ENCODE measurements at regions of chr6 and their contacts with region 1.

Region 1: GRCh38 chr6:12605888-12606345 is 110.7 kb upstream of the PHACTR1 start:
- DNase-seq: no peak
- ATAC-seq: peak in 1 of 2 donors; percentile 76
- H3K4me3 ChIP-seq: no peak overlapping the region
- H3K27ac ChIP-seq: no peak overlapping the region
- H3K4me1 ChIP-seq: peaks cover 3% of the 10 kb centered on the region
- H3K27me3 ChIP-seq: no peaks in the 10 kb centered on the region

Region 2: DNA sequence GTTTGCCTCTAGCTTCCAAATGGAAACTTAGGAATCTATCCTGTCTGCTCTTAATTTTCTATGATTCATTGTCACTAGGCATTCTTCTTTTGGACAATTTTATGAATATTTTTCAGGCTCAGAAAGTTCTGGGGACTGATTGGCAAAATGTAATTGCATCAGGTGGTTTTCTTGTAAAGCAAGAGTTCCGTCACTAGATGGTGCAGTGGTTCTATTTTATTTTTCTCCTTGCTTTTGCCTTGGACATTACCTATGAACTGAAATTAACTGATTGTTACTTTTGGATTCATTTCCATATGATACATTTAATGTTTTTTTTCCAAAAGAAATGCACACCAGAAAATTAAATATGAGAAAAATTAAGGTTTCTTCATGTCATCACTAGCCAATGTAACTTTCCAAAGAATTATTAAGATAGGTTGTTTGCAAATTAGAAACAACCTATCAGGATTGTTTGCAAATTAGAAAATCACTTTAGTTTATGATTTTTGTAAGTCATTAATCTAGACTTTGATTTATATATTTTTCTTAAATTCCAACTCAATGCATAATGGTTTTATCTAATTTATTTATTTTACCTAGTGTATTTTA is 1020.4 kb before region 1 on chr6:
- intact Hi-C with region 1: loop called in 3 of 4 experiments (anchors 5 to 10 kb)
- DNase-seq: no peak
- ATAC-seq: no peak
- H3K4me3 ChIP-seq: no peak overlapping the region
- H3K27ac ChIP-seq: no peak overlapping the region
- H3K4me1 ChIP-seq: no peaks in the 10 kb centered on the region
- H3K27me3 ChIP-seq: no peaks in the 10 kb centered on the region

Region 3: GRCh38 chr6:11653028-11653583 is 952.8 kb before region 1 on chr6:
- intact Hi-C with region 1: loop called in 2 of 4 experiments (anchors 5 to 10 kb)
- DNase-seq: peak in 1 of 3 donors; percentile 28
- ATAC-seq: peak in 1 of 2 donors; percentile 54
- H3K4me3 ChIP-seq: no peak overlapping the region
- H3K27ac ChIP-seq: peak overlapping the region; percentile 16
- H3K4me1 ChIP-seq: no peaks in the 10 kb centered on the region
- H3K27me3 ChIP-seq: no peaks in the 10 kb centered on the region

Region 4: GRCh38 chr6:12147557-12148316 is 458.2 kb before region 1 on chr6:
- intact Hi-C with region 1: loop called in 1 of 4 experiments (anchors 10 kb)
- DNase-seq: no peak
- ATAC-seq: no peak
- H3K4me3 ChIP-seq: no peak overlapping the region
- H3K27ac ChIP-seq: no peak overlapping the region
- H3K4me1 ChIP-seq: no peaks in the 10 kb centered on the region
- H3K27me3 ChIP-seq: no peaks in the 10 kb centered on the region

Region 5: GRCh38 chr6:12289933-12290820 is 315.7 kb before region 1 on chr6 and contains the start of gene EDN1:
- intact Hi-C with region 1: loop called (anchors 2 to 10 kb)
- DNase-seq: peak; percentile 80 to 90 (median 89)
- ATAC-seq: peak; percentile 91 to 94
- H3K4me3 ChIP-seq: peak within 1 kb of the TSS; percentile 72
- H3K27ac ChIP-seq: peak within 1 kb of the TSS; percentile 66
- H3K4me1 ChIP-seq: no peaks in the 10 kb centered on the region
- H3K27me3 ChIP-seq: no peaks in the 10 kb centered on the region
- total RNA-seq, gene EDN1: 1.3 to 5.8 (median 2.0) TPM

Region 6: GRCh38 chr6:12392490-12392889 is 213.4 kb before region 1 on chr6:
- intact Hi-C with region 1: loop called in 1 of 4 experiments (anchors 5 kb)
- DNase-seq: no peak
- ATAC-seq: peak; percentile 29 to 69
- H3K4me3 ChIP-seq: no peak overlapping the region
- H3K27ac ChIP-seq: no peak overlapping the region
- H3K4me1 ChIP-seq: peaks cover 2% of the 10 kb centered on the region
- H3K27me3 ChIP-seq: no peaks in the 10 kb centered on the region

Region 7: DNA sequence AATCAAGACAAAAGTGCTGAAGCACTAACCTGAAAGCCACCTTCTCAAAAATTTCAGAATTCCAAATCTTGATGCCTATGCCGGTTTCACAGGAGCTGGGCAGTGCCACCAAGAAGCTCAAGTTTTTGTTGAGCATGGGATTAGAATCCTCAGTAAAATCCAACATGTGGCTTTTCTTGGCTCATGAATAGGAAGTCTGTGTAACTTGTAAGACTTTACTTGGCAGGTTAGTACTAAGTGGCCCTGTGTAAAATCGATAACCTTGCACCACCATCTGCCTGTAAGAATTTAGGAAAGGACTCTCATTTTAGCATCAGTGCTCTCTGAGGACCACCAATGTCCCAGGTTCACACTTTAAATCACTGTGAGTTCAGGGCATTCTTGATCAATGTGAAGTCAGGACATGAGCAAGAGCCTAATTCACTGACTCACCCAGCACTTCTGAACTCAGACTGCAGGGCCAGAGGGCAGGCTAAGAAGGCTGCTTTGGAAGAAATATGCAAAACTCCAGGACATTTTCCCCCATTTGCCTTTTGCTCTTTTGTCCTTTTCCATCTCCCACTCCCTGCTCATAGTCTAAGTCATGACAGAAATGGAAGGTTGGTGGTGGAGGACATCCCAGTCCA is 202.6 kb before region 1 on chr6:
- intact Hi-C with region 1: loop called in 1 of 4 experiments (anchors 10 kb)
- DNase-seq: no peak
- ATAC-seq: peak; percentile 53 to 64
- H3K4me3 ChIP-seq: no peak overlapping the region
- H3K27ac ChIP-seq: no peak overlapping the region
- H3K4me1 ChIP-seq: no peaks in the 10 kb centered on the region
- H3K27me3 ChIP-seq: no peaks in the 10 kb centered on the region

Region 8: DNA sequence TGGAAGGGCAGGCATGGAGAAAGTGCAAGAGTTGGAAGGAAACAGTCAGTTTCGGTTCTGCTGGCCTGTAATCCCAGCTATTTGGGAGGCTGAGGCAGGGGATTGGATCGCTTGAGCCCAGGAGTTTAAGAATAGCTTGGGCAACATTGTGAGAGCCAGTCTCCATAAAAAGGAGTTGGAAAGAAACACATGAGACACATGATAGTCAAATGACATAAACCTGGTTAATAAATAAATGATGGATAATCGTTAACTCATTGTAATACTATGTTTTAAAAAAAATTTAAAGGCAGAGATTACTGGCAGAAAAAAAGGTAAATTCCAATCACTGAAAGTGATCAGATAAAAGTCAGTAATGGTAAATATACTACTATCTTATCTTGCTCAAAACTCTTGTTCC is 73.4 kb after region 1 on chr6:
- intact Hi-C with region 1: no loop called
- DNase-seq: no peak
- ATAC-seq: no peak
- H3K4me3 ChIP-seq: no peak overlapping the region
- H3K27ac ChIP-seq: no peak overlapping the region
- H3K4me1 ChIP-seq: no peaks in the 10 kb centered on the region
- H3K27me3 ChIP-seq: peaks cover 2% of the 10 kb centered on the region

Measured in right cardiac atrium (tissue), 5 donors.